ENCODE measurements at regions of chr17 and their contacts with region 1.

Region 1: GRCh38 chr17:48024937-48025906 is 12.4 kb downstream of the COPZ2 start:
- DNase-seq: peak; percentile 82
- ATAC-seq: peak; percentile 88
- H3K4me3 ChIP-seq: peak overlapping the region; percentile 61 to 93
- H3K27ac ChIP-seq: peak overlapping the region; percentile 76
- H3K4me1 ChIP-seq: peaks cover 27% of the 10 kb centered on the region
- H3K27me3 ChIP-seq: no peaks in the 10 kb centered on the region
- CTCF ChIP-seq: peak; percentile 94

Region 2: GRCh38 chr17:47935961-47936360 is 89.3 kb before region 1 on chr17:
- CTCF ChIA-PET with region 1: no interaction called
- POLR2A ChIA-PET with region 1: interaction called, 14 read pairs
- in situ Hi-C with region 1: no loop called
- intact Hi-C with region 1: no loop called
- DNase-seq: no peak
- ATAC-seq: no peak; the same call in 1 of the 2 replicates
- H3K4me3 ChIP-seq: no peak overlapping the region
- H3K27ac ChIP-seq: no peak overlapping the region
- H3K4me1 ChIP-seq: no peaks in the 10 kb centered on the region
- H3K27me3 ChIP-seq: no peaks in the 10 kb centered on the region
- CTCF ChIP-seq: no peak

Region 3: GRCh38 chr17:48123111-48123510 is 97.9 kb after region 1 on chr17:
- CTCF ChIA-PET with region 1: interaction called, 11 read pairs
- POLR2A ChIA-PET with region 1: no interaction called
- in situ Hi-C with region 1: no loop called
- intact Hi-C with region 1: no loop called
- DNase-seq: no peak
- ATAC-seq: no peak
- H3K4me3 ChIP-seq: no peak overlapping the region
- H3K27ac ChIP-seq: no peak overlapping the region
- H3K4me1 ChIP-seq: peaks cover 13% of the 10 kb centered on the region
- H3K27me3 ChIP-seq: no peaks in the 10 kb centered on the region
- CTCF ChIP-seq: no peak

Region 4: GRCh38 chr17:48153691-48154358 is 128.6 kb after region 1 on chr17:
- CTCF ChIA-PET with region 1: no interaction called
- POLR2A ChIA-PET with region 1: no interaction called
- in situ Hi-C with region 1: no loop called
- intact Hi-C with region 1: no loop called
- DNase-seq: peak; percentile 12
- ATAC-seq: peak; percentile 88
- H3K4me3 ChIP-seq: no peak overlapping the region
- H3K27ac ChIP-seq: no peak overlapping the region
- H3K4me1 ChIP-seq: peaks cover under 1% of the 10 kb centered on the region; the same call in 1 of the 2 replicates
- H3K27me3 ChIP-seq: peaks cover 23% of the 10 kb centered on the region
- CTCF ChIP-seq: peak; percentile 84

Region 5: GRCh38 chr17:48202959-48203358 is 177.7 kb after region 1 on chr17:
- CTCF ChIA-PET with region 1: interaction called, 10 read pairs
- POLR2A ChIA-PET with region 1: no interaction called
- in situ Hi-C with region 1: no loop called
- intact Hi-C with region 1: no loop called
- DNase-seq: no peak
- ATAC-seq: peak; percentile 17; the same call in 1 of the 2 replicates
- H3K4me3 ChIP-seq: no peak overlapping the region
- H3K27ac ChIP-seq: no peak overlapping the region
- H3K4me1 ChIP-seq: peaks cover 10% of the 10 kb centered on the region; the same call in 1 of the 2 replicates
- H3K27me3 ChIP-seq: no peaks in the 10 kb centered on the region
- CTCF ChIP-seq: no peak

Measured in Panc1 (cell line).